ENCODE measurements at regions of chr1 and their contacts with region 1.

Region 1: DNA sequence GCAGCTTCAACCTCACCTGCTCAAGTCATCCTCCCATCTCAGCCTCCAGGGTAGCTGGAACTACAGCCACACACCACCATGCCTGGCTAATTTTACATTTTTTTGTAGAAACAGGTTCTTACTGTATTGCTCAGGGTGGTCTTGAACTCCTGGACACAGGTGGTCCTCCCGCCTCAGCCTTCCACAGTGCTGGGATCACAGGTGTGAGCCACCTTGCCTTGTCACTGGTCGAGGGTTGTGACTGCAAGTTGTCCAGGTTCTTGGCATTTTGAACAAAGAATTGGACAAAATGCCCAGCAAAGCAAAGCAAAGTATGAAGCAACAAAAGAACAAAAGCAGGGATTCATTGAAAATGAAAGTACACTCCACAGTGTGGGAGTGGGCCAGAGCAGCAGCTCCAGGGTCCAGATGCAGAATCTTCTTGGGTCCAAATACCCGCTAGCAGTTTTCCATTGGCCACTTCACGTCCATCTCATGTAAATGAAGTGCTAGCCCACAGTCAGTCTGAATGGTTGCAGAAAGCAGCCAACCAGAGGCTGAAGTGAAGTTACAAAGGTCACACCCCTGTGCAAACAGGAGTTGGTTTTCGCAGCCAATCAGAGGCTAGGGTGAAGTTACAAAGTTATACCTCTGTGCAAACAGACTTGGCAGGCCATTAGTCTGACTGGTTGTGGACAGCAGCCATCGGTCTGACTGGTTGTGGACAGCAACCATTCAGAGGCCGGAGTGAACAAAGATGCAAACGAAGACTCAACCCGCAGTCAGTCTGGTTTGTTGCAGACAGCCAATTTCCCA is 109.5 kb upstream of the KIF26B start:
- DNase-seq: peak in 1 of 10 donors; percentile 42
- H3K4me3 ChIP-seq: peak overlapping the region in 50 of 59 donors; percentile 1 to 54 (median 30)
- H3K27ac ChIP-seq: peak overlapping the region in 32 of 59 donors; percentile 9 to 88 (median 53)
- H3K27me3 ChIP-seq: no peaks in the 10 kb centered on the region
- CTCF ChIP-seq: no peak

Region 2: DNA sequence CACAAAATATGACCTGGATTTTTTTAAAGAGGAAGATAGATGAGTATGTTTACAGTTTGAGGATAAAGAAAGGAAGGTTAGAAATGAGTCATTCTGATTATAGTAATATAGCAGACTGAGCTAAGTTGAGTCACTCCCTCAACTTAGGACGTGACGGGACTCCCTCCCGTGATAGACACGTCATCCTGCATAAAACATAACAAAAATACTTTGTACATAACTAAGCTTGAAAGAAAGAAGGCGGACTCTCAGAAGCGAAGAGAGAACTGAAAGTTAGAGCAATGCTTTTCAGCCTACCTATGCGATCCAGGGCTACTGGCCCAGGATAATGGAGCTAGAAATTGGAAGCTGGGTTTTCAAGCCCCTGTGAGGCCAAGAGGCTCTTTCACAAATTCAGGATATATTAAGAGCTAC is 445.3 kb before region 1 on chr1:
- intact Hi-C with region 1: loop called (anchors 5 to 10 kb)
- DNase-seq: no peak
- H3K4me3 ChIP-seq: no peak overlapping the region
- H3K27ac ChIP-seq: no peak overlapping the region
- H3K27me3 ChIP-seq: no peaks in the 10 kb centered on the region
- CTCF ChIP-seq: no peak

Region 3: GRCh38 chr1:244835276-244836134 is 209.8 kb before region 1 on chr1 and contains the start of gene COX20:
- intact Hi-C with region 1: loop called in 1 of 2 experiments (anchors 5 kb)
- DNase-seq: peak; percentile 70 to 88 (median 82)
- H3K4me3 ChIP-seq: peak within 1 kb of the TSS; percentile 50 to 90 (median 78)
- H3K27ac ChIP-seq: peak within 1 kb of the TSS; percentile 96 to 100 (median 100)
- H3K27me3 ChIP-seq: no peaks in the 10 kb centered on the region
- CTCF ChIP-seq: peak in 18 of 56 donors; percentile 4 to 38 (median 15)
- total RNA-seq, gene COX20: 23.7 to 50.5 (median 37.6) TPM

Region 4: DNA sequence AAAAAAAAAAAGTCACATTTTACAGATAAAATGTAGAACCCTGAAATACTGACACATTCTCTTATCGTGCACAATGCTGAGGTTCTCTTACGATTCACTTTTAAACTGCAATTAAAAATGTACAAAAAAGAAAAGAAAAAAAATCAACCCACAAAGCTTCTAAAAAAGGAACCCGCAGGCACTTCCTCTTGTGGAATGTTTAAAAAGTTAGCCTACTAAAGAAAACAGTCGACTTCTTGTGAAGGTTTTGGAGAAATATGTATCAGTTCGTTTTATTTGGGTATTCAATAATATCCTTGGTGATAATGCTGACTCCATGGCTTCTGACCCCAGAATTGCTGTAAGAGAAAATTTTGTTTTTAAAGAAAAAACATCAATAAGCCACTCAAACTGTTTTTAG is 191.1 kb before region 1 on chr1:
- intact Hi-C with region 1: no loop called
- DNase-seq: no peak
- H3K4me3 ChIP-seq: peak overlapping the region in 1 of 59 donors; percentile 25
- H3K27ac ChIP-seq: peak overlapping the region in 6 of 59 donors; percentile 2 to 35 (median 14)
- H3K27me3 ChIP-seq: no peaks in the 10 kb centered on the region
- CTCF ChIP-seq: no peak

Region 5: DNA sequence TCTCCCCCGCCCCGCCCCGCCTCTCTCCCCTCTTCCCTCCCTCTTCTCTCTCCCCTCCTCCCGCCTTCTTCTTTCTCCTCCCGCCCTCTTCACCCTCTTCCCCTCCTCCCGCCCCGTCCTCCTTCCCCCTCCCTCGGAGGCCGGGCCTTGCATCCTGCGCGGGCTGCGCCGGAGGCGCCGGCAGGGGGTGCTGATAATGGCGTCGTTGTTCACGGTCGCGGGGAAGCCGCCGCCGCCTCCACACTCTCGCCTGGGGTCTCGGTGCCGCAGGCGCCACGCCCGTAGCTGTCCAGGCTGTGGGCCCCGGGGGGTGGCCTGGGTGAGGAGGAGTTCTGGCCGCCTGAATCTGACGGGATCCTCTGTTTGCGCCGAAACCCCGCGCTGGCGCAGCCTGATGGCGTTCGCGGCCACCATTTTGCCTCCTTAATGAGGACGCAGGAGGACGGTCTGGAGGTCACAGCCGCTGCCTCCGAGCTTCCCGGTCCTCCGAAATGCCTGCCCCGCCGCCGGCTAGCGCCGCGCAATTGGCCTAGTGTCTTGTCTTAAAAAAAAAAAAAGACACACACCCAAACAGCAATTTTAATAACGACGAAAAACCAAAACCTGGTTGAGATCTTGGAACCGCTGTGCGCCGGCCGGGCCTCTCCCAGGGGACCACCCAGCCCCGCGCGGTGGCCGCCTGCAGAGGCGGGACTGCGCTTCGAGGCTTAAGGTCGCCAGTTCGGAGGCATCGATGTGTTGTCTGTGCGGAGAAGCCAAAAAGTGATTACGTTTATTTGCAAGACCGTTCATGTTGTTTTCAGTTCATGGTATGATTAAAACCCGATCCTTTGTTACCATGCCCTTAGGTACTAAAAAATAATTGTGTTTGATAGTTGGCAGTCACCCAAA is 74.4 kb before region 1 on chr1:
- intact Hi-C with region 1: loop called (anchors 2 to 5 kb)
- DNase-seq: peak; percentile 87 to 95 (median 93)
- H3K4me3 ChIP-seq: peak overlapping the region; percentile 56 to 89 (median 79)
- H3K27ac ChIP-seq: peak overlapping the region; percentile 96 to 100 (median 100)
- H3K27me3 ChIP-seq: no peaks in the 10 kb centered on the region
- CTCF ChIP-seq: peak in 55 of 56 donors; percentile 27 to 77 (median 56)